Ovary (tissue), 10 donors: ENCODE measurements at regions of chr13 and their contacts with region 1.

Region 1: GRCh38 chr13:98890186-98890585 is 87.7 kb downstream of the DOCK9 start:
- DNase-seq: no peak
- H3K4me3 ChIP-seq: no peak overlapping the region
- H3K27ac ChIP-seq: no peak overlapping the region
- H3K4me1 ChIP-seq: no peaks in the 10 kb centered on the region
- H3K27me3 ChIP-seq: no peaks in the 10 kb centered on the region
- CTCF ChIP-seq: no peak
- EP300 ChIP-seq: no peak
- POLR2A ChIP-seq: no peak

Region 2: GRCh38 chr13:97659602-97660001 is 1230.6 kb before region 1 on chr13:
- intact Hi-C with region 1: no loop called
- DNase-seq: no peak
- H3K4me3 ChIP-seq: no peak overlapping the region
- H3K27ac ChIP-seq: no peak overlapping the region
- H3K4me1 ChIP-seq: no peaks in the 10 kb centered on the region
- H3K27me3 ChIP-seq: no peaks in the 10 kb centered on the region
- CTCF ChIP-seq: no peak
- EP300 ChIP-seq: no peak
- POLR2A ChIP-seq: no peak

Region 3: DNA sequence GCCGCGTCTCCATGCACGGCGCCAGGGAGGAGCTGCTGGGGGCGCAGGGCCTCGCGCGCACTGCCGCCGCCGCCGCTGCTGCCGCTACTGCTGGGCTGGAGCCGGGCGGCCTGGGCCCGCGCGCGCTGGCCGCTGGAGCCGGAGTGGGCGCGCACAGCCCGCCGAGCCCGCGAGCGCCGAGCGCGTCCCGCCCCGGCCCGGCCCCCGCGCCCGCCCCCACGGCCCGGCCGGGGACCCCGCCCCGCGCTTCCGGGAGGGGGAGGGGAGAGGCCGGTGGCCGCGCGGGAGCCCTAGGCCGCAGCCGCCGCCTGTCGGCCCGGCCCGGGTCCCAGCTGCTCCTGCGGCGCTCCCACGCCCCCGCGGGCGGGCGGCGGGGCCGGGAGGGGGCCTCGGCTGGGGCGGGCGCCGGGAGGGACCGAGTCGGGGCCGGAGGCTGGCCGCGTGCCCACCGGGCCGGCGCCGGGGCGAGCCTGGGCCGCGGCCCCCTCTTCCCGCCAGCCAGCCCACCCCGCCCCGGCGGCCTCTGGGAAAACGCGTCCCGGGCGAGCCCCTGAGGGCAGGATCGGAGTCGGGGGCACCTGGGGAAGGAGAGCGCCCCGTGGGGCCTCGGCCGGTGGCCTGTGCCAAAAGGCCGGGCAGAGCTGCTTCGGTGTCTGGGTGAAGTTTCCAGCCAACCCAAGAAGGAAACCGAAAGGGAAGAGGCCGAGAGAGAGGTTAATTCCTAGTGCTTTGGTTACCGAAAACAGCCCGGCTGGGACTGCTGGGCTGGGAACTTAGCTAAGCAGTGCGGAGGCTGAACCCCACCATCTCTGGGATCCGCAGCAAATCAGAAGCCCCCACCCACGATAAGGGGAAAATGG is 313.0 kb before region 1 on chr13 and contains the start of gene STK24:
- intact Hi-C with region 1: no loop called
- DNase-seq: peak; percentile 69 to 85 (median 81)
- H3K4me3 ChIP-seq: peak within 1 kb of the TSS; percentile 99
- H3K27ac ChIP-seq: peak within 1 kb of the TSS; percentile 94 to 97
- H3K4me1 ChIP-seq: peaks cover 4% of the 10 kb centered on the region
- H3K27me3 ChIP-seq: no peaks in the 10 kb centered on the region
- CTCF ChIP-seq: no peak
- EP300 ChIP-seq: no peak
- POLR2A ChIP-seq: no peak
- total RNA-seq, gene STK24: 34.0 to 73.1 (median 60.6) TPM

Region 4: DNA sequence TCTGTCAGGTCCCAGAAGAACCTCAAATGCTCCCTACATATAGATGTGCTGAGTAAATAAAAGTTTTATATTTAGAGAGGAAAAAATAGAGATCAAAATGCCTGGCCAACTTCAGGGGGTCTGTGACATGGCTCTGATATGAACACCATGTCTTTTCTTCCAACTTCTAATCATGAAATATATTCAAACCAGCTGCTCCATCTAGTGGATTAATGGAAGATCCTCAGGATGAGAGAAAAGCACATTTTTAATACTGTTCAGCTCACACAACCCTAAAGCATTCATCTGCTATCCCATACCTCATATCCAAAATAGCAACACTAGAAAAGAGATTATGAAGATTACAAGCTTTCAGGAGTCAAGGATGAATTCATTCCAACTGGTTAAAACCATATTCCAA is 143.6 kb after region 1 on chr13:
- intact Hi-C with region 1: loop called in 1 of 4 experiments (anchors 10 kb)
- DNase-seq: no peak
- H3K4me3 ChIP-seq: no peak overlapping the region
- H3K27ac ChIP-seq: no peak overlapping the region
- H3K4me1 ChIP-seq: no peaks in the 10 kb centered on the region
- H3K27me3 ChIP-seq: no peaks in the 10 kb centered on the region
- CTCF ChIP-seq: peak; percentile 19 to 62 (median 46)
- EP300 ChIP-seq: no peak
- POLR2A ChIP-seq: no peak